ENCODE measurements at regions of chr15 and their contacts with region 1.

Region 1: GRCh38 chr15:45611305-45611704 is 23.5 kb upstream of the SQOR start:
- DNase-seq: no peak
- ATAC-seq: no peak
- H3K4me3 Mint-ChIP-seq: no peak overlapping the region
- H3K27ac Mint-ChIP-seq: no peak overlapping the region
- H3K4me1 Mint-ChIP-seq: peaks cover 15% of the 10 kb centered on the region
- H3K27me3 Mint-ChIP-seq: no peaks in the 10 kb centered on the region

Region 2: GRCh38 chr15:45429974-45430792 is 181.1 kb before region 1 on chr15:
- CTCF ChIA-PET with region 1: interaction called, 17 read pairs
- DNase-seq: peak; percentile 86
- ATAC-seq: peak; percentile 95
- H3K4me3 Mint-ChIP-seq: peak overlapping the region; percentile 58
- H3K27ac Mint-ChIP-seq: no peak overlapping the region
- H3K4me1 Mint-ChIP-seq: peaks cover 5% of the 10 kb centered on the region
- H3K27me3 Mint-ChIP-seq: peaks cover 29% of the 10 kb centered on the region

Region 3: DNA sequence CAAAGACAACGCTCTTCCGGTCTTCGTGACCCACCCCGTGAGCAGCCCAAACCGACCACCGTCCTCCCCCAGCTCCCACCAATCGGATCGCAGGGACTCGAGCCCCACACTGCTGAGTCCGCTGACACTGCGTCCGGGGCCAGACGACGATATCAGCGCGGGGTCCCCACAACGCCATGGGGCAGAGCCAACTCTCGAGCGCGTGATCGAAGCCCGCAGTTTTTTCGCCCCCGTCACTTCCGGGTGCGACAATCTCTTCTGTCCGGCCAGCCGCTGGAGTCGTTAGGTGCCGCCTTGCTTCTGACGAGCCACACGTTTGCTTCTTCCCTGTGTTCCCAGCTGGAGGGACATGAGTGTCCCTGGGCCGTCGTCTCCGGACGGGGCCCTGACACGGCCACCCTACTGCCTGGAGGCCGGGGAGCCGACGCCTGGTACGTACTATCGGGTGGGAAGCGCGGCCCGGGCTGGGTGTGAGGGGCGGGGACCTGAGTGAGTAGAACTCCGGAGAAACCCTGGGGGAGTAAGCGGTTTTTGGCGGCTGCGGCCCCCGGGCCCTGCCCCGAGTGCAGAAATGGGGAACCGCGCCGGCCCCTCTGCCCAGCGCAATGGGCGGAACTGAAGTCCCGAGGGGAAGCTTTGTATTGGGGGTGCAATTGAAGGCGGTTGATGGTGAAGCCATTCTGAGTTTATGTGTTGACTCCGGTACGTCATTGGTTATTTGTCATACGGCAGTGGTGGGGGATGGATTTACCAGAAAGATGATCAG is 24.0 kb before region 1 on chr15 and contains the start of gene BLOC1S6:
- CTCF ChIA-PET with region 1: interaction called, 22 read pairs
- DNase-seq: peak; percentile 93
- ATAC-seq: peak; percentile 87
- H3K4me3 Mint-ChIP-seq: peak within 1 kb of the TSS; percentile 98
- H3K27ac Mint-ChIP-seq: peak within 1 kb of the TSS; percentile 100
- H3K4me1 Mint-ChIP-seq: peaks cover 33% of the 10 kb centered on the region
- H3K27me3 Mint-ChIP-seq: peaks cover 4% of the 10 kb centered on the region
- total RNA-seq, gene BLOC1S6: 33.6 to 35.7 TPM

Region 4: GRCh38 chr15:45594319-45594718 is 17.0 kb before region 1 on chr15:
- CTCF ChIA-PET with region 1: interaction called, 22 read pairs
- DNase-seq: no peak
- ATAC-seq: no peak
- H3K4me3 Mint-ChIP-seq: no peak overlapping the region
- H3K27ac Mint-ChIP-seq: no peak overlapping the region
- H3K4me1 Mint-ChIP-seq: peaks cover 13% of the 10 kb centered on the region
- H3K27me3 Mint-ChIP-seq: no peaks in the 10 kb centered on the region

Region 5: DNA sequence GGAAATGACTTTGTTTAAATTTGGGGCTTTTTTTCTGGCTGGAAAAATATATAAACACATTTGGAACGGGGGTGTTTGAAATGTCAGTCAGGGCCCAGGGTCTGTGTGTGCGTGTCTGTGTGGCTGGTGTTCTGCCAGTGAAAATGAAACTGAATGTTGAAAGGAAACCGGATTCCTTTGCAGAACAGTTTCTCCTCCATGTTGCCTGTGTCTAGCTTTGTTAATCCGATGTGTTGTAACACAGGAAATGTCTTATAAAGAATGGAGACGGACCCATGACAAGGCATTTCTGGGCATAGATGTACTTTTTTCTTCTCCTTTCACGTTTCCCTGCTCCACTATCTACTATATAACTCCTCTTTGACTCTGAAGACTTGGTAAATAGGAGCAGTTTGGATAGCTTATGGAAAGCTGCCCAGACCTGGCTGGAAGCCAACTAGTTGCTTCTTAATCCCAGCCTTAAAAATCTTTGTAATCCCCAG is 26.3 kb after region 1 on chr15:
- CTCF ChIA-PET with region 1: interaction called, 14 read pairs
- DNase-seq: peak; percentile 75
- ATAC-seq: peak; percentile 66
- H3K4me3 Mint-ChIP-seq: peak overlapping the region; percentile 100
- H3K27ac Mint-ChIP-seq: peak overlapping the region; percentile 95
- H3K4me1 Mint-ChIP-seq: peaks cover 62% of the 10 kb centered on the region
- H3K27me3 Mint-ChIP-seq: no peaks in the 10 kb centered on the region